A549 (cell line): ENCODE measurements at regions of chr4 and their contacts with region 1.

Region 1: GRCh38 chr4:128782076-128782715 is 27.3 kb upstream of the JADE1 start:
- DNase-seq: peak in 1 of 2 experiments; percentile 38
- ATAC-seq: peak in 1 of 2 experiments; percentile 76; a peak in 4 of 6 replicates
- H3K4me3 ChIP-seq: no peak overlapping the region
- H3K27ac ChIP-seq: peak overlapping the region; percentile 2 to 17; a peak in 1 of 6 replicates
- H3K4me1 ChIP-seq: peaks cover 25% of the 10 kb centered on the region
- CTCF ChIP-seq: 0 out of 3 replicates have a peak, but pooled peaks have one; percentile 20
- EP300 ChIP-seq: no peak
- POLR2A ChIP-seq: no peak
- RAD21 ChIP-seq: peak; percentile 45 to 54; a peak in 4 of 5 replicates

Region 2: DNA sequence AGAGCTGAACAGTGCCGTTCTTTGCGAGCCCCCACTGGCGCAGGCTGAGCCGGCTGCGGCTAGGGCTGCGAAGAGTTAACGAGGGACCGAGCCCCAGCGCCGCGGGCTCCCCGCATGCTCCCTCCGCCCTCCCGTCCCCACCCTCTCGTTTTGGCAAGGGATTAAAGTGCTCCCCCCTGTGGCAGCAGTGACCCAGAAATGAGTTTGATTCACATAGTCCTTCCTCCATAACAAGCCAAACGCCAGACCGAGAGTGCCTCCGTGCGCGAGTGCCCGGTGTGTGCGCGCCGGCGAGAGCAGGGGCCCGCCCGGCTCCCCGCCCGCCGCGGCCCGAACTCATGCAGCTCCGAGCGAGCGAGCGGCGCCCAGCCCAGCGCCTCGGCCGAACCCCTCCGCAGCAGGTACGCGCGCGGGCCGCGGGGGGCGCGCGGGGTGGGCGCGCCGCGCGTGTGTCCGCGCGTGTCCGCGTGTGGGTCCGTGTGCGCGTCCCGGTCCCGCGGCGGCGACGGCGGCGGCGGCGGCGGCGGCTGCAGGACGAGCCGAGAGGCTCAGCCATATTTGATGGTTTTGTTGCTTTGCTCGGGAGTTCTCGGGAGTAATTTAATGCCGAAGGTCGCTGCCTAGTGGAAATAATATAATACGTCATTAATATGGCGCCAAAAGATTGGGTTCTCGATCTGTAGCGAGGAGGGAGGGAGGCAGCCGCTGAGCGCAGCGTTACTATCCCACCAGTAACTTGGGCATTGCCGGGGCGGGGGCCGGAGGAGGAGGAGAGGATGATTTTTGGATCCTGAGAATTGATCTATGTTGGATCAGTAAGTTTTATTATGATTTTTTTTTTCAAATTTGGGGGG is 27.5 kb after region 1 on chr4 and contains the start of gene JADE1:
- CTCF ChIA-PET with region 1: interaction called, 10 read pairs
- POLR2A ChIA-PET with region 1: no interaction called
- DNase-seq: peak; percentile 79 to 94
- ATAC-seq: peak; percentile 71 to 76
- H3K4me3 ChIP-seq: peak within 1 kb of the TSS; percentile 85
- H3K27ac ChIP-seq: peak within 1 kb of the TSS; percentile 96 to 100
- H3K4me1 ChIP-seq: peaks cover 19% of the 10 kb centered on the region
- CTCF ChIP-seq: peak; percentile 71
- EP300 ChIP-seq: peak; percentile 26 to 41; a peak in 2 of 5 replicates
- POLR2A ChIP-seq: peak; percentile 31
- RAD21 ChIP-seq: peak; percentile 85 to 95
- polyA plus RNA-seq, gene JADE1: 46.7 and 54.6 TPM in 2 replicates